ENCODE measurements at regions of chr7 and their contacts with region 1.

Region 1: GRCh38 chr7:116671681-116672595 is at the start of gene MET:
- DNase-seq: peak; percentile 86
- H3K4me3 ChIP-seq: peak within 1 kb of the TSS; percentile 72 to 92 (median 80)
- H3K27ac ChIP-seq: peak within 1 kb of the TSS; percentile 81
- H3K4me1 ChIP-seq: peaks cover 27% of the 10 kb centered on the region
- H3K27me3 ChIP-seq: no peaks in the 10 kb centered on the region
- CTCF ChIP-seq: peak; percentile 21 to 62
- POLR2A ChIP-seq: peak; percentile 56
- total RNA-seq, gene MET: 44.5 and 52.0 TPM in 2 replicates

Region 2: DNA sequence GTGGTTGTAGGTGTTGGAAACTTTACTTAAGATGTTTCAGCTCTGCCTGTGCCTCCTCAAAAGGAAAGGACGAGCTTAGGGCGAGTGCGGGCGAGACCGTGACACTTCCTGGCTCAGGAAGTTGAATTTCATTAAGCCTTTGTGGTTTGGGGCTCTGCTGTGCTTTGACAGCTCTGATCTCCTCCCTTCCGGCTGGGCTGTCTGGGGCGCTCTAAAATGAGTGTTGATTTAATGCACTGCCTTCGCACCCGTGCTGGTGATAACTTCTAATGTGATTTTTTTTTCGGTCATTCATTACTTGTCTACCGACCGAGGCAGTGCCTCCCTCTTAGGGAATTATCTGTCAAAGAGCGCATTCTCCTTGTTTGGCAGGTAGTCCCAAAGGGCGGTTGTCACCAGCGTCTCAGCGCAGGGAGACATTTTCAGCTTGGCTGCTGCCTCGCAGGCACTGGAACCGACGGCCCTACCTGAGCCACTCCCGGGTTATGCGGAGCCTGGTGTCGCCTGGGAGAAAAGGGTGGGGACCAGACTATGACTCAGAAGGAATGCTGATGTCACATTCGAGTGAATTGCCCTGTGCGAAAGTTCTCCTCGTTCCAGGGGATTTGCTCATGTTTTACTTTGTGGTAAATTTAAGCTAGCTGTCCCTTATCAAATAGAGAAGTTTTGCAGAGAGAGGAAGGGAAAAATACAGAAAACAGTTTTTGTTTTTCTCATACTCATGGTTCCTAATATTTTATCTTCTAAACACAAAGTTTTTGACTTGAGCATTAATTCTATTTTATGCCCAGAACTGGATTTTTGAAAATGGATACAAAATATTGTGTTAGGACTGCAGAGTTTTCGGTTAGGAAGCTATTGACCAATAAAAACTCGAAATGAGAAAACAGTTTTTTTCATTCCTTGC is 460.7 kb before region 1 on chr7:
- CTCF ChIA-PET with region 1: no interaction called
- POLR2A ChIA-PET with region 1: no interaction called
- dilution Hi-C with region 1: no loop called
- intact Hi-C with region 1: loop called (anchors 10 kb)
- DNase-seq: peak; percentile 86
- H3K4me3 ChIP-seq: peak overlapping the region; percentile 79 to 89 (median 84)
- H3K27ac ChIP-seq: peak overlapping the region; percentile 89
- H3K4me1 ChIP-seq: peaks cover 39% of the 10 kb centered on the region
- H3K27me3 ChIP-seq: no peaks in the 10 kb centered on the region
- CTCF ChIP-seq: no peak
- POLR2A ChIP-seq: peak; percentile 52

Region 3: GRCh38 chr7:116687801-116688201 is 15.9 kb after region 1 on chr7:
- CTCF ChIA-PET with region 1: interaction called, 15 read pairs
- POLR2A ChIA-PET with region 1: no interaction called
- dilution Hi-C with region 1: no loop called
- intact Hi-C with region 1: no loop called
- DNase-seq: peak; percentile 90
- H3K4me3 ChIP-seq: no peak overlapping the region
- H3K27ac ChIP-seq: peak overlapping the region; percentile 69
- H3K4me1 ChIP-seq: peaks cover 44% of the 10 kb centered on the region
- H3K27me3 ChIP-seq: no peaks in the 10 kb centered on the region
- CTCF ChIP-seq: no peak
- POLR2A ChIP-seq: no peak

Region 4: GRCh38 chr7:116736927-116737715 is 65.2 kb after region 1 on chr7:
- CTCF ChIA-PET with region 1: interaction called, 23 read pairs
- POLR2A ChIA-PET with region 1: no interaction called
- dilution Hi-C with region 1: no loop called
- intact Hi-C with region 1: loop called (anchors 1 kb)
- DNase-seq: peak; percentile 90
- H3K4me3 ChIP-seq: peak overlapping the region in 1 of 3 experiments; percentile 19
- H3K27ac ChIP-seq: peak overlapping the region; percentile 58
- H3K4me1 ChIP-seq: peaks cover 40% of the 10 kb centered on the region
- H3K27me3 ChIP-seq: no peaks in the 10 kb centered on the region
- CTCF ChIP-seq: no peak
- POLR2A ChIP-seq: no peak

Region 5: GRCh38 chr7:116786791-116787443 is 115.0 kb after region 1 on chr7:
- CTCF ChIA-PET with region 1: interaction called, 32 read pairs
- POLR2A ChIA-PET with region 1: no interaction called
- dilution Hi-C with region 1: no loop called
- intact Hi-C with region 1: loop called (anchors 1 kb)
- DNase-seq: peak; percentile 76
- H3K4me3 ChIP-seq: no peak overlapping the region
- H3K27ac ChIP-seq: no peak overlapping the region
- H3K4me1 ChIP-seq: peaks cover 7% of the 10 kb centered on the region
- H3K27me3 ChIP-seq: no peaks in the 10 kb centered on the region
- CTCF ChIP-seq: peak; percentile 33 to 45
- POLR2A ChIP-seq: no peak

Region 6: DNA sequence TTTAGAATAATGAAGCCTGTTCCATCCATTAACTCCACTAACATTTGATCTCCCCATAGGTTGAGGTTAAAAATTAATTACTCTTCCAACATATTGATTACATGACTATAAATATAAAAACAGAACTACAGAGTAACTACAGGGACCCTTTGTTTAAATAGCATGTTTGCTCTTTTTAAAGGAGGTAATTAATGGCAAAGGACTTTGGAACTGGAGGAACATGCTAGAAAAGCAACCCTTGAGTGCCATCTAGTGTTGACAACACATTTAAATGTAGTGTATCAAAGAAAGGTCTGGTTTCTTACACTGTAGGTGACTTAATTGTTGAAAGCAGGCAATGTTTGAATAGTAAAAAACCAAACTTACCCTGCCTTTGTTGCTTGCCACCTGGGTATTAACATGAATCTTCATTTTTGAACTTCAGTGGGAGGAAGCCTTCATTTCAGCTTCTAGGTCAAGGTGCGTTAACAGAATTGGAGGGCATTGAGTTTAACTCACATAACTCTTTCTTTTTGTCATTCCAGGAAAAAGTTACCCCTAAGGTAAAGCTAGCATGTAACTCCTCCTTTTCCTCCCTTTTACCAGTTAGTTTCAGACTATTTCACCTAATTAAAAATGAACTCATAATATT is 137.8 kb after region 1 on chr7:
- CTCF ChIA-PET with region 1: interaction called, 15 read pairs
- POLR2A ChIA-PET with region 1: no interaction called
- dilution Hi-C with region 1: no loop called
- intact Hi-C with region 1: loop called (anchors 1 kb)
- DNase-seq: peak; percentile 86
- H3K4me3 ChIP-seq: no peak overlapping the region
- H3K27ac ChIP-seq: no peak overlapping the region
- H3K4me1 ChIP-seq: peaks cover 19% of the 10 kb centered on the region
- H3K27me3 ChIP-seq: no peaks in the 10 kb centered on the region
- CTCF ChIP-seq: peak; percentile 25 to 43
- POLR2A ChIP-seq: no peak

Measured in endothelial cell of umbilical vein (primary cell).